AG04450 (cell line): ENCODE measurements at regions of chr1 and their contacts with region 1.

Region 1: DNA sequence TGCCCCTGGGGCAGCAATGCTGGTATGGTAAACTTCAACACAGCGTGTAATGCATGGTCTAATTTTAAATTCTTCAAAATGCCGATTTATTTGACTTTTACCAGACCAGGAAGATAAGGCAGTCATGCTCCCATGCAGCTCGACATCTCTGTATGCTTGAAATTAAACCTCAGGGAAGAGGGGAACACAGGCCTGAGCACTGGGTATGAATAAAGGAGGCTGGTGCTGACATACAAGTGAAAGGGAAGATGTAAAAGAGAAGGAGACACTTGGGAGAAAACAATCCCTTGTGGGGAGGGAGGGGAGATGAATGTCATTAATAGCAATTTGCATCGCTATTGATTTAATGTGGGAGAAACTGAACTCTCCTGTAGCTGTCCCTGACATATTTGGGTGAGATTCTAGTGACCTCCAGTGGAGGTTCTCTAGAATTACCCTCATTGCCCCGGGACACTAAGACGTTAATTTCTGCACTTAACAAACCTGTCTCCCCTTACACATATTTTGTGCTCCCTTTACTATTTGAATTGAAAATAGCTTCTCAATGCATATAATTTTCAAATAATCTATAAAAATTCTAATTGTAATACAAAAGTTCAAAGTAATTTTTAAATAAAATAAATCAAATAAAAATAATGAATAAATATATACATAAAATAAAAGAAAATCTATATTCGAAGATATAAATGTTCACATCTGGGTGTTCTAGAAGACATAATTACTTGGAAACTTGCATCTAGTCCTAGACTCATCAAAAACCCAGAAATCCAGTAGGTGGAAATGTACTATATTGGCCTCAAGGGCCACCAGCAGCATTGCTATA is 283.1 kb downstream of the LMX1A start:
- DNase-seq: peak; percentile 11
- H3K4me3 ChIP-seq: no peak overlapping the region
- H3K27ac ChIP-seq: no peak overlapping the region
- H3K27me3 ChIP-seq: peaks cover 3% of the 10 kb centered on the region
- CTCF ChIP-seq: peak; percentile 79

Region 2: GRCh38 chr1:163528710-163529348 is 1544.6 kb before region 1 on chr1:
- CTCF ChIA-PET with region 1: interaction called, 38 read pairs
- POLR2A ChIA-PET with region 1: no interaction called
- DNase-seq: no peak
- H3K4me3 ChIP-seq: no peak overlapping the region
- H3K27ac ChIP-seq: no peak overlapping the region
- H3K27me3 ChIP-seq: no peaks in the 10 kb centered on the region
- CTCF ChIP-seq: peak; percentile 73

Region 3: DNA sequence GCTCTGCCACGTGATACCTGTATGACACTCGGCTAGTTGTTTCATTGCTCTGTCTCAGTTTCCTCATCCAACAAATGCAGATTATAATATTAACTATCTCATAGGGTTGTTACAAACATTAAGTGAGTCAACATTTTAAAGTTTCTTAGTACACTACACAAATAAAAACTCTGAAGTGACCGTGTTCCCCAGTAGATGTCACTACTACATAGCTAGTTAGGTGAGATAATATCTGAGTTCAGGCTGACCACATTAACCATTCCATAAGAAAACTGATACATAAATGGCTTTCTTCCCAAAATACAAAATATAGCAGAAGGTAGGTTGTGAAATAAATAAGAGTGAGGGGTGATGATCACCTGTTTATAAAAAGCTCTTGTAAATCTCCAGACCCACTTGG is 1537.6 kb before region 1 on chr1:
- CTCF ChIA-PET with region 1: interaction called, 38 read pairs
- POLR2A ChIA-PET with region 1: no interaction called
- DNase-seq: no peak
- H3K4me3 ChIP-seq: no peak overlapping the region
- H3K27ac ChIP-seq: no peak overlapping the region
- H3K27me3 ChIP-seq: no peaks in the 10 kb centered on the region
- CTCF ChIP-seq: 0 out of 2 replicates have a peak, but pooled peaks have one; percentile 12

Region 4: DNA sequence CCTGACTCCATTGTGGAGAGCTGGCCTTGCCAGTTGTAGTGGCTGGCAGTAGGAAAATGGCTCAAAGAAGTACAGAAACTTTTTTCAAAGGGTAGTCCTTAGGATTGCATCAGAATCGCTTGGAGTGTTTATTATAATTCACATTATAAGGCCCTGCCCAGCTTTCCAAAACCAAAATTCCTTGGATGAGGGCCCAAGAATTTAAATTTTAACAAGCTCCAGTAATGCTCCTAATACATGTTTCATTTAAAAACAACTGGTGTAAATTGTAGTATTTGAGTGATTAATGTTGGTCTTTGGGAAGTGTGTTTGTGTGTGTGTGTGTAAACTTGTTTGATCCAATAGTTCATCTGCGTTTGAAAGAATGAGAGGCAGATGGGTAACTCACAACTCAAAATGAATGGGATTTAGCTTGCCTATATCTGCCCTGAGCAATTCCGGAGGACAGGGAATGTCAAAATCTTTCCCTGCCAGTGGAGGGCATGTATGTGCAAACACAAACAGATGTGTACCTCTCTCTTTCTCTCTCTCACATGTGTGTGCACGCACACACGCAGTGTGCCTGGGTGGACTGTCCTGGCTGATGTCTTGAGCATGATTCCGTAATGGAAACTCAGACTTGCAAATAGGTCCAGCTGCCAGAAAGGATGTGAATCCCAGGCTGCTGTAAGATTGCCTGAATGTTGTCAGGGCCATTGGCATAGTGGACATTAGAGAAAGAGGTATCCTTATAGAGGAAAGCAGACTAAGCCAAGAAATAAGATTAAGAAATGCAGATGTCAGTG is 10.0 kb before region 1 on chr1:
- CTCF ChIA-PET with region 1: interaction called, 12 read pairs
- POLR2A ChIA-PET with region 1: no interaction called
- DNase-seq: no peak
- H3K4me3 ChIP-seq: no peak overlapping the region
- H3K27ac ChIP-seq: no peak overlapping the region
- H3K27me3 ChIP-seq: no peaks in the 10 kb centered on the region
- CTCF ChIP-seq: no peak